ENCODE measurements at regions of chr2 and their contacts with region 1.

Region 1: DNA sequence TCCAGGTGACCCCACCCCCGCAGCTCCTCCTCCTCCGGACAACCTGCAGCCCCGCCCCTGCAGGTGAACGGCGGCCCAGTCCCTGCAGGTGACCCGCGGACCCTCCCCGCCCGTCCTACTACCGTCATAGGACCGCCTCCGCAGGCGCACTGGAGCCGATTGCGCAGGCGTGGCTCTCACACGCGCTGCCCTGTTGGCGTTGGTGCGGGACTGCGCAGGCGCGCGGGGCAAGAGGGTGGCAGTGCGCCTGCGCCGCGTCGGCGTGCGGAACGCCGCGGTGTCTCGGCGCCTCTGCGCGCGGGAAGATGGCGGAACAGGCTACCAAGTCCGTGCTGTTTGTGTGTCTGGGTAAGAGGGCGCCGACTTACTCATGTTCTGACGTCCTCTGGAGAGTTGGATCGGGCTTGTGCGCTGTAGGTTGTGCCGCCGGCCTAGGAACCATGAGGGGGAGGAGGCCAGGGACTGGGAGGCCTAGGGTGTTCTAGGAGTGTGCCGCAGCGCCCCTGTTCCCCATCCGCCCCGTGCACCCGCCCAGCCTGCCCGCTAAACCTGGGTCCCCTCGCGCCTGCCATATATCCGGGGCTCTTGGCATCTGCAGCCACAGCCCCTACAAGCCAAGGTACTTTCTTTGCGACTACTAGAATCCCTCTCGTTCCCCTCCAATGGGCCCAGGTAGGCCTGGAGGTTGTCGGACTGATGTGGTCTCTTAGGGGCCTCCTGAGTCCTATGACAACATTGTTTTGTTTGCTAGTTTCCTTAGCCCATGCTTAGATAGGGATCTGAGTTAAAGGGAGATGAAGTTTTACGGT is at the start of gene ACP1:
- DNase-seq: peak; percentile 85 to 91
- ATAC-seq: peak; percentile 95 to 97
- H3K4me3 ChIP-seq: peak within 1 kb of the TSS; percentile 79 to 96 (median 91)
- H3K27ac ChIP-seq: peak within 1 kb of the TSS; percentile 80 to 86 (median 84)
- H3K4me1 ChIP-seq: peaks cover 23 to 39% of the 10 kb centered on the region in 2 donors
- H3K27me3 ChIP-seq: no peaks in the 10 kb centered on the region
- CTCF ChIP-seq: no peak
- POLR2A ChIP-seq: peak; percentile 65 to 75
- total RNA-seq, gene ACP1: 69.7 to 91.3 (median 81.9) TPM

Region 2: GRCh38 chr2:133675-134593 is 130.9 kb before region 1 on chr2:
- in situ Hi-C with region 1: no loop called
- intact Hi-C with region 1: no loop called
- DNase-seq: no peak
- ATAC-seq: no peak
- H3K4me3 ChIP-seq: no peak overlapping the region
- H3K27ac ChIP-seq: no peak overlapping the region
- H3K4me1 ChIP-seq: no peaks in the 10 kb centered on the region
- H3K27me3 ChIP-seq: peaks cover 0 to under 1% (median 0%) of the 10 kb centered on the region in 3 donors
- CTCF ChIP-seq: no peak
- POLR2A ChIP-seq: no peak

Region 3: GRCh38 chr2:383178-383577 is 118.3 kb after region 1 on chr2:
- in situ Hi-C with region 1: no loop called
- intact Hi-C with region 1: no loop called
- DNase-seq: no peak
- ATAC-seq: no peak
- H3K4me3 ChIP-seq: no peak overlapping the region
- H3K27ac ChIP-seq: no peak overlapping the region
- H3K4me1 ChIP-seq: no peaks in the 10 kb centered on the region
- H3K27me3 ChIP-seq: no peaks in the 10 kb centered on the region
- CTCF ChIP-seq: no peak
- POLR2A ChIP-seq: no peak

Region 4: GRCh38 chr2:677056-677965 is 412.4 kb after region 1 on chr2 and contains the start of gene TMEM18:
- in situ Hi-C with region 1: no loop called
- intact Hi-C with region 1: loop called (anchors 5 kb)
- DNase-seq: peak; percentile 89 to 92
- ATAC-seq: peak; percentile 89 to 90
- H3K4me3 ChIP-seq: peak within 1 kb of the TSS; percentile 80 to 95 (median 91)
- H3K27ac ChIP-seq: peak within 1 kb of the TSS; percentile 91 to 99 (median 94)
- H3K4me1 ChIP-seq: peaks cover 4 to 22% of the 10 kb centered on the region in 2 donors
- H3K27me3 ChIP-seq: no peaks in the 10 kb centered on the region
- CTCF ChIP-seq: peak in 3 of 5 experiments; percentile 5 to 30 (median 11)
- POLR2A ChIP-seq: peak; percentile 73 to 78
- total RNA-seq, gene TMEM18: 9.0 to 26.1 (median 12.3) TPM